ENCODE measurements at regions of chr10 and their contacts with region 1.

Region 1: GRCh38 chr10:124719213-124719851 is 24.8 kb downstream of the FAM53B start:
- DNase-seq: peak; percentile 81
- ATAC-seq: peak; percentile 67
- H3K4me3 Mint-ChIP-seq: peak overlapping the region; percentile 71
- H3K27ac Mint-ChIP-seq: peak overlapping the region; percentile 84
- H3K4me1 Mint-ChIP-seq: peaks cover 87% of the 10 kb centered on the region
- H3K27me3 Mint-ChIP-seq: no peaks in the 10 kb centered on the region

Region 2: GRCh38 chr10:124530215-124530665 is 189.1 kb before region 1 on chr10:
- CTCF ChIA-PET with region 1: interaction called, 12 read pairs
- POLR2A ChIA-PET with region 1: no interaction called
- DNase-seq: peak; percentile 89
- ATAC-seq: peak; percentile 97
- H3K4me3 Mint-ChIP-seq: no peak overlapping the region
- H3K27ac Mint-ChIP-seq: no peak overlapping the region
- H3K4me1 Mint-ChIP-seq: peaks cover 12% of the 10 kb centered on the region
- H3K27me3 Mint-ChIP-seq: no peaks in the 10 kb centered on the region

Region 3: DNA sequence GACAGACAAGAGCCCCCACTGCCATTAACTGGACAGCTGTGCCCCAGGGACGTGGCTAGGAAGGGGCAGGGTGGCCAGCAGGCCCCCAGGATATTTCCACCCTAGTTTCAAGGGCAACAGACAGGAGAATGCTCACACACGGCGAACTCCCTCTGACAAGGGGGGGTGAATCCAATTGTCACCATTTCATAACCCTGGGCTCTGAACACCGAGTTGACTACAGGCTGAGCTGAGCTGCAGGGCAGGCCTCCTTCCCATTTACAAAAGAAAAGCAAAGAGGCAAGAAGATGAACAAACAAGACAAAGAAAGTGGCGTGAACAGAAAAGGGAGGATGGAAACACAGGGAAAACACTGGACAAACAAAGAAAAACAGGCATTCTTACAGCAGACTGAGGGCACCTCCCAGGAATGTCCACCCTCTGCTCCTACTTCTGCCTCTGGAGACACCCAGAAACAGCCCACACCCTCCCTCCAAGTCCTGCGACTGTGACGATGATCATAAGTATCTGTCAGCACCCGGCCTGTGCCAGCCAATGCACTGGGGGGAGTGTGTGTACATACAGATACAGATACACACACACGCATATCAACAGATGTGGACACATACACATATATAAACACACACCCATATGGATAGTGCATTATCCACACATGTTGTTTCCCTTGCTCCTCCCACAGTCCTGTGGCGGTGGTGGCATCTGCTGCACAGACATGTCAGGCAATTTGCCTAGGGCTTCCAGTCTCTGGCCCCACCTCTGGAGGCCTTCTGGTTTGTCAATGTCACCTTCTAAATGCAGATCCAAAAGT is 41.4 kb before region 1 on chr10:
- CTCF ChIA-PET with region 1: interaction called, 19 read pairs
- POLR2A ChIA-PET with region 1: interaction called, 13 read pairs
- DNase-seq: no peak
- ATAC-seq: peak; percentile 50
- H3K4me3 Mint-ChIP-seq: peak overlapping the region; percentile 56
- H3K27ac Mint-ChIP-seq: peak overlapping the region; percentile 84
- H3K4me1 Mint-ChIP-seq: peaks cover 55% of the 10 kb centered on the region
- H3K27me3 Mint-ChIP-seq: no peaks in the 10 kb centered on the region

Region 4: GRCh38 chr10:124697830-124698544 is 21.3 kb before region 1 on chr10:
- CTCF ChIA-PET with region 1: interaction called, 156 read pairs
- POLR2A ChIA-PET with region 1: interaction called, 28 read pairs
- DNase-seq: peak; percentile 42
- ATAC-seq: peak; percentile 24
- H3K4me3 Mint-ChIP-seq: peak overlapping the region; percentile 6
- H3K27ac Mint-ChIP-seq: peak overlapping the region; percentile 92
- H3K4me1 Mint-ChIP-seq: peaks cover 94% of the 10 kb centered on the region
- H3K27me3 Mint-ChIP-seq: no peaks in the 10 kb centered on the region

Region 5: GRCh38 chr10:124708922-124709520 is 10.3 kb before region 1 on chr10:
- CTCF ChIA-PET with region 1: interaction called, 156 read pairs
- POLR2A ChIA-PET with region 1: interaction called, 15 read pairs
- DNase-seq: no peak
- ATAC-seq: no peak
- H3K4me3 Mint-ChIP-seq: no peak overlapping the region
- H3K27ac Mint-ChIP-seq: no peak overlapping the region
- H3K4me1 Mint-ChIP-seq: peaks cover 56% of the 10 kb centered on the region
- H3K27me3 Mint-ChIP-seq: no peaks in the 10 kb centered on the region

Measured in activated CD8-positive, alpha-beta T cell treated with anti-CD3 and anti-CD28 coated beads, Interleukin-2, amount 10 ng/mL, durations not matched to agents 7 days and 5 days (primary cell).